ENCODE measurements at regions of chr2 and their contacts with region 1.

Region 1: DNA sequence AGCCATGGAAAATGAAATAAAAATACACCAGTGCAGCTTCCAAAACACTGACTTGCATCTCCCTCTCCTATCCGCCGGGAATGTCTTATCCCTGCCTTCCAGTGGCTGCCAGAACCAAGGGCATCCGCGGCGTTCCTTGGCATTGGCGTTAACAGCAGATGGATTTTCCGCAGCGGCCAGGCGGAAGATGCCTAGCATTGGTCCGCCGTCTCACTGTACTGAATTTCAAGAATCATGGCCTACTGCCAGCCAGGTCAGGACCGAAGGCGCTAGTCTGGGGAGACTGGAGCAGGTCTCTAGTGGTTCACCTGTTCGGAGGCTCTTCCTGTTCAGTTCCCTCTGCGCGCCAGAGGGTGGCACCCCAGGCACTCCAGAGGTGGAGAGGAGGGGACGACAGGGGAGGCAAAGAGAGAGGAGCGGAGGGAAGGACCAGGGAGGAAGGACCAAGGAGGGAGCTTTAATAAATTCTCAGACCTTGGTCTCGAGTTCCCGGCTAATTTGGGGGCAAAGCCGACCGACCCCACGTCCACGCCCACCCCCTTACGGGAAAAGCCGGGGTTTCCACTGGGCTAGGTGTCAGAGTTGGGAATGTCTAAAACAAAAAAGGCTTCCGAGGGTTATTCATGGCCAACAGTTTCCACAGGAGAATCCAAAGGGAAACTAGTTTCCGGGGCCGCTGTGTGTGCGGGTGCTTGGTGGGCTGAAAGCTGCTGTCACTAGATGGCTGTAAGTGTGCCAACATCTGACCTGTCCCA is 3.7 kb upstream of the BCL2L11 start:
- DNase-seq: peak; percentile 77
- ATAC-seq: peak; percentile 25
- H3K4me3 Mint-ChIP-seq: peak overlapping the region; percentile 64
- H3K27ac Mint-ChIP-seq: no peak overlapping the region
- H3K4me1 Mint-ChIP-seq: peaks cover 45% of the 10 kb centered on the region
- H3K27me3 Mint-ChIP-seq: peaks cover 76% of the 10 kb centered on the region

Region 2: DNA sequence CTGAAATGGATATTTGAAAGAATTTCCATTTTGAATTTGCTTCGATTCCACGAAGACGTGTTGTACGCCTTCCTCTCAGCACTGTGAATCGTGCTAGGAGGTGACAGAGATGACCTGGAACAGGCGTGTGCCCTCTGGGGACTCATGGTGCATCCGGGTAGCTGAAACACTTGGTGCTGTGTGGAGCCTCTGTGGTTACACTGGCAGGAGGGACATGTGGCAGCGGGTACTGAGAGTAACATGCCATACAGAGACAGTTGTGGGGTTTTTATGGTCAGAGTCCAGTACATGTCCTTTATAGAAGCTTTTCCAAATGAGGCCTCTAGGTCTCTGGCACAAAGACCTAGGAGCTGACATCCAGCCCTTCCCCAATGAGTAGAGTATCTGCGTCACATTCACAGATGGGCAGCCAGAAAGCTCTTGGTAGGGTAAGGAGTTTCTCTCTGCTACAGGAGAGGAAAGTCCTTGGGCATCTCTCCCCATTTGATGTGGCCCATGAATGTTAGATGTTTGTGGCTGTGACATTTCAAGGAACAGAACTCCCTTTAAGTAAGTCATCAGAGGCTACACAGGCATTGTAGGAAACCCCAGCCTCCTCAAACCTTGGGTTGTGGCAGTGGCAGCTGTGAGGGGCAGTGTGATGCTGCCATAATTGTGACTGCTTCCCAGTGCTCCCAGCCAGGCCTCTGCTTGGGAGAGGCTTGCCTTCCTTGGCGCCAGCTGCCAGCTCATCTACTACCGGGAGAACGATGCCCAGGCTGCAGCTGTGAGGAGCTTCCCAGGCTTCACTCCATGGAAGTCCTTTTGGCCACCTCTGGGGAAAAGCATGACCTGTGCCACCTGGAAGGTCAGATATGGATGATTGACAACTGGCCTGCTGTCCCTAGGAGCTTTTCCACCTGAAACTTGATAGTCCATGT is 304.0 kb before region 1 on chr2:
- CTCF ChIA-PET with region 1: interaction called, 15 read pairs
- DNase-seq: no peak
- ATAC-seq: no peak
- H3K4me3 Mint-ChIP-seq: no peak overlapping the region
- H3K27ac Mint-ChIP-seq: no peak overlapping the region
- H3K4me1 Mint-ChIP-seq: peaks cover 5% of the 10 kb centered on the region
- H3K27me3 Mint-ChIP-seq: peaks cover 58% of the 10 kb centered on the region

Region 3: GRCh38 chr2:111698743-111699554 is 581.9 kb after region 1 on chr2:
- CTCF ChIA-PET with region 1: interaction called, 12 read pairs
- DNase-seq: peak; percentile 90
- ATAC-seq: peak; percentile 92
- H3K4me3 Mint-ChIP-seq: peak overlapping the region; percentile 51
- H3K27ac Mint-ChIP-seq: peak overlapping the region; percentile 80
- H3K4me1 Mint-ChIP-seq: peaks cover 45% of the 10 kb centered on the region
- H3K27me3 Mint-ChIP-seq: peaks cover 19% of the 10 kb centered on the region

Measured in activated CD8-positive, alpha-beta memory T cell treated with anti-CD3 and anti-CD28 coated beads, Interleukin-2, amount 10 ng/mL, durations not matched to agents 7 days and 5 days (primary cell).